HEK293 (cell line): ENCODE measurements at regions of chr6 and their contacts with region 1.

Region 1: DNA sequence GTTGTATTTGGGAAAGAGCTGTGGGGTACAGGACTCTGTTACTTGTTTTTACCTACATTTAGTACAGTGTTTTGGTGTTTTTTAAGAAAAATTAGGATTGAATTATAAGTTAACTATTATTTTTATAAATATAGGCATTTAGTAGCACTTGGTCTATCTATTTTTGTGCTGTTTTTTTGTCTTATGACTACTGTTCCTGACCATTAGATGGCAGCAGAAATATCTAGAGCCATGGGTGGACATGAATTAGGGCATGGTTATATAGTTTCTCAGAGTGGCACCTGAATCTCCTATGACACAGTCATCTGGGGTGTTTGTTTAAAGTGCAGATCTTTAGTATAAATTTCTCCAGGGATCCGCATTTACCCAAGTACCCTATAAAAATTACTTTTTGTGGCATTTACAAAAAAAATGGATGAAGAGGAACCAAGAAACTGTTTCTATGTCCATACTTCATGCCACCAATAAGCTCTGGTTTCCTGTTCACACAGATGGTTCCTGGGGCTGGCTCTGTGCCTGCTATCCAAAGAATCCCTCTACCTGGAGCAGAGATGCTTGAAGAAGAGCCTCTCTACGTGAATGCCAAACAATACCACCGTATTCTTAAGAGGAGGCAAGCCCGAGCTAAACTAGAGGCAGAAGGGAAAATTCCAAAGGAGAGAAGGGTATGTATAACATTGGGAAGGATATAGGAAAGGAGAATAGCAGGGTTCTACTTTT is 19.8 kb downstream of the NFYA start:
- H3K4me3 ChIP-seq: no peak overlapping the region
- H3K27ac ChIP-seq: no peak overlapping the region
- H3K4me1 ChIP-seq: no peaks in the 10 kb centered on the region
- CTCF ChIP-seq: no peak; the same call in 1 of the 2 replicates

Region 2: DNA sequence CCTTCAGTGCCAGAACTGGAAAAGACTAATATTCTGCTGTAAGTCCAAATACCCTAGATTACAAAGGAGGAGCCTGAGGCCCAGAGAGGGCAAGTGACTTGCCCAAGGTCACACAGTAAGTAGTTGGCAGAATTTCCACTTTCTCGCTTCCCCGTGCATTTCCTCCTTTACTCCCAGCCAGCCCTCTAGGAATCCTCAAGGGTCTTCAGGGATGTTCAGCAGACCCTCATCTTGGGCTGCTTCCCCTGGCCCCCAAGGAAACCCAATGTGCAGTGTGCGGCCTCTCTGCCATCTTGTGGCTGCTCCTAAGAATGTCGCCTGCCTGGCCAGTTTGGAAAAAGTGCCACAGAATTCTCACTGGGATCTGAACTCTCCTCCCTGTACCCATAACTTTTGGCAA is 287.7 kb before region 1 on chr6:
- CTCF ChIA-PET with region 1: no interaction called
- POLR2A ChIA-PET with region 1: no interaction called
- H3K4me3 ChIP-seq: no peak overlapping the region
- H3K27ac ChIP-seq: no peak overlapping the region
- H3K4me1 ChIP-seq: no peaks in the 10 kb centered on the region
- CTCF ChIP-seq: no peak

Region 3: GRCh38 chr6:41071923-41072675 is 20.5 kb before region 1 on chr6 and contains the start of gene OARD1:
- CTCF ChIA-PET with region 1: interaction called, 12 read pairs
- POLR2A ChIA-PET with region 1: interaction called, 4 read pairs
- H3K4me3 ChIP-seq: peak within 1 kb of the TSS; percentile 95
- H3K27ac ChIP-seq: peak within 1 kb of the TSS; percentile 94
- H3K4me1 ChIP-seq: 0 out of 2 replicates have a peak, but pooled peaks cover 2% of the 10 kb centered on the region
- CTCF ChIP-seq: no peak

Region 4: GRCh38 chr6:41103847-41104246 is 11.3 kb after region 1 on chr6:
- CTCF ChIA-PET with region 1: interaction called, 18 read pairs
- POLR2A ChIA-PET with region 1: no interaction called
- H3K4me3 ChIP-seq: no peak overlapping the region
- H3K27ac ChIP-seq: no peak overlapping the region
- H3K4me1 ChIP-seq: no peaks in the 10 kb centered on the region
- CTCF ChIP-seq: no peak

Region 5: DNA sequence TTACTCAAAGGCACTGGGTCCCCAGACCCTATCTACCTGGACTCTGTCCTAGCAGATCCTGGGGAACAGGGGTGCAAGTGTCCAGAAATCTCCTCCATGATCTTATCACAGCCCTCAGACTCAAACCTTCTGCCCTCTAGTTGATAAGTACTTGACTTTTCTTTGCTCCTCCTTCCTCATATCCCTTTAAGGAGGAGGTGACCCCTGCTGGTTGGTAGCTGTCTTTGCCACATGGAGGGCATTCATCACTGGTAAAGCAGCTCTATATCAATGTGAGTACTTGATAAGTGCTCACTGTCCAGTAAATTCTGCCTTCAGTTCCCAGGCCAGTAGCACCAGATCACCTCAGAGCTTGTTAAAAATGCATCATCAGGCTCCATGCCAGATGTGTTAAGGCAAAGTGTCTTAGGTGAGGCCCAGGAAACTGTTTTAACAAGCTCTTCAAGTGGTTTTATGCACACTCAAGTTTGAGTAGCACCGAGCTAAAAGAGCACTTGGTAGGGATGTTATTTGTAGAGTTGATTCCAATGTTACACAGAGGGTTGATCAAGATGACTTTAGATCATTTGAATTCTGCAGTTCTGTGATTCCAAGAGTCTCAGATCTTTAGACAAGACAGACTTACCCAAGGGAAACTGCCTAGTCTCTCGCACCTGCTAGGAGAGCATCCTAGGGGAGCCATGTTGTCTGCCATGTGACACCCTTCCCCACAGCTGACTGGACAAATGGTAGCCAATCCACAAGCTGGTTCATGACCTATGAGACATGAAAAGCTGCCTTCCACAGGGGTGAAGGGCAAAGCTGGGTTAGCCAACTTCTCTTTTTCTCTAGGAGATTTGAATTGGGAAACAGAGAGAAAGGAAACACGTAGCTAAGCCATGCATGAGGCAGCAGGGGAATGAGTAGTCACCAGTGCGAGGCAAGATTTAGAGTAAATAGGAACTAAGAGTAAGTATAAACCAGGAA is 89.8 kb after region 1 on chr6:
- CTCF ChIA-PET with region 1: interaction called, 42 read pairs
- POLR2A ChIA-PET with region 1: no interaction called
- H3K4me3 ChIP-seq: no peak overlapping the region
- H3K27ac ChIP-seq: no peak overlapping the region
- H3K4me1 ChIP-seq: no peaks in the 10 kb centered on the region
- CTCF ChIP-seq: peak; percentile 41; the same call in 1 of the 2 replicates